ENCODE measurements at regions of chr7 and their contacts with region 1.

Region 1: GRCh38 chr7:121379930-121380329 is 16.2 kb downstream of the FAM3C start:
- DNase-seq: no peak
- ATAC-seq: no peak
- H3K4me3 Mint-ChIP-seq: no peak overlapping the region
- H3K27ac Mint-ChIP-seq: no peak overlapping the region
- H3K4me1 Mint-ChIP-seq: peaks cover 41% of the 10 kb centered on the region
- H3K27me3 Mint-ChIP-seq: no peaks in the 10 kb centered on the region
- CTCF ChIP-seq: no peak

Region 2: GRCh38 chr7:121366852-121367431 is 13.0 kb before region 1 on chr7:
- CTCF ChIA-PET with region 1: interaction called, 23 read pairs
- POLR2A ChIA-PET with region 1: no interaction called
- intact Hi-C with region 1: no loop called
- DNase-seq: peak; percentile 33
- ATAC-seq: peak; percentile 45
- H3K4me3 Mint-ChIP-seq: no peak overlapping the region
- H3K27ac Mint-ChIP-seq: no peak overlapping the region
- H3K4me1 Mint-ChIP-seq: peaks cover 24% of the 10 kb centered on the region
- H3K27me3 Mint-ChIP-seq: no peaks in the 10 kb centered on the region
- CTCF ChIP-seq: peak; percentile 84